Right ventricle myocardium inferior (tissue), 1 donor: ENCODE measurements at regions of chr3 and their contacts with region 1.

Region 1: DNA sequence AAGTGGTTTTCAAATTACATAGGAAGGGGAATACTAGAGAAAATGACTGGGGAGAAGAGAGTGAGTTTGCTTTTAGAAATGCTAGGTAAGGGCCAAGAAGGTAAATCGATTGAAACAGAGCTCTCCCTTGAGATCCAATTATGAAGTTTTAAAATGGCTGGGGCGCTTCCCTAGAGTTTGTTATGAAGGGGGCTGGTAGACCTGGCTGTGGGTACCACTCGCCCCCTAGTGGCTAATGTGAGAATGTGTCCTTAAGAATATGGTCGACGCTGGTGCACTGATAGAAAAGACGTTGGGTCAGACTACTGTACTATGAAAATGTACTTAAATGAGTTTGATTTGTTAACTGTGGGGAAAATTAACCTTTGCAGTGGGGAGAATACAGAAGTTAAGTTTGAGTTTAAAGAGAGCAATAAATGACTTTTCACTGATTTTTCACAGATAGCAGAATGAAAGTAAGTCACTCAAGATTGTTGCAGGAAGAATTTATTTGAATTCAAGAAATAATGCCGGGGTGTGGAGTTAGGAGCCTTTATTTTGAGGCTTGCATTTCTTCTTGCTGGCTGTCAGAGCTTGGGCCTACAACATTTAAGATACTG is 9.2 kb downstream of the TMPRSS7 start:
- DNase-seq: no peak
- ATAC-seq: peak; percentile 87

Region 2: DNA sequence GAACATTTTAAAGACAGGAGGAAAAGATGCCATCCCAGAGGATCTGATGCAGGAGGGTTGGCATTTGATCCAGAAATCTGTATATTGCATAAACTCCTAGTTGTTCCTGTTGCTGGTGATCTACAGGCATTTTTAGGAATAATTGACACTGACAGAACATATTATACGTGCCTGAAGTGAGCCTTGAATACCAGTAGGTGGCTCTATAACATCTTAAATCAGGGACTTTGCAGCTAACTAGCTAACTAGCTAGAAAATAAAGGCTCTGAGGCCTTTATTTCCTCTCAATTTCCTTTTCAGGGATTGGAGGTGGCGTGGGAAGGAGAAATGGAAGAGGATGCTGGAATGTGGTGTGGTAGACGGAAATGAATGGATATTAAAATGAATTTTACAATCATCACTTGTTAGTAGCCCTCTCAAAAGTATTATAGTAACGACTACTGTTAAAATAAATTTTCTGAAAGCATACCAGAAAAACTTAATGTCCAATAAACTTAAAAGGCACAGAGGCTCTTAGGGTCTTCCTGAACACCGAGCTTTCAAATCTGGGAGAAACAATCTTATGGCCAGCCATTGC is 374.7 kb before region 1 on chr3:
- intact Hi-C with region 1: loop called (anchors 2 kb)
- DNase-seq: no peak
- ATAC-seq: peak; percentile 81

Region 3: DNA sequence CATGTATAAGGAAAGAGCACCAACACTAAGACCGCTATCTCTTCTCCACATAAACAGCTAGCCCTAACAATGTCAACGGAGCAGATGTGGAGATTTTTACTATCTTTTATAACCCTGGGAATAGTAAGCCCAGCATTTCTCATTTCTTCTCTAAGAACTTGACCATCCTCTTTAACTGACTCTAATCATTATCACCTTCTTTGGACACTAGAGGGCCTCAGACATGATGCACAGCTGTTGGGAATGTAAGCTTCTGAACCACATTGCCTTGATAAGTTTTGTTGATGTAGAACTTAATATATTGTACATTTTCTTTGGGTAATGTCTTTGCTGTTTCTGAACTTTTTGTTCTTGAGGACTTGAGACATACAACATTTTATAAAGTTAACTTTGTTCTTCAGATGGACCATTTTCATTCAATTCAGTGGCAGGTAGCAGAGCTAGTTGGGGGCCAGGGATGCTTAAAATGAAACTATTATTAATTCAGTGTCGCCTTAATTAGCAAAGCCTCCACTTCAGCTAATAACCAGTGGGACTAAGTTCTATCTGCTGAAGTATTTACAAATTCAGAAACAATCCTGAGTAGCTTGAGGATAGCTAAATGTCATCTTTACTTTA is 54.5 kb before region 1 on chr3:
- intact Hi-C with region 1: loop called (anchors 2 kb)
- DNase-seq: no peak
- ATAC-seq: peak; percentile 67